Left ventricle myocardium inferior (tissue), 1 donor: ENCODE measurements at regions of chr3 and their contacts with region 1.

Region 1: DNA sequence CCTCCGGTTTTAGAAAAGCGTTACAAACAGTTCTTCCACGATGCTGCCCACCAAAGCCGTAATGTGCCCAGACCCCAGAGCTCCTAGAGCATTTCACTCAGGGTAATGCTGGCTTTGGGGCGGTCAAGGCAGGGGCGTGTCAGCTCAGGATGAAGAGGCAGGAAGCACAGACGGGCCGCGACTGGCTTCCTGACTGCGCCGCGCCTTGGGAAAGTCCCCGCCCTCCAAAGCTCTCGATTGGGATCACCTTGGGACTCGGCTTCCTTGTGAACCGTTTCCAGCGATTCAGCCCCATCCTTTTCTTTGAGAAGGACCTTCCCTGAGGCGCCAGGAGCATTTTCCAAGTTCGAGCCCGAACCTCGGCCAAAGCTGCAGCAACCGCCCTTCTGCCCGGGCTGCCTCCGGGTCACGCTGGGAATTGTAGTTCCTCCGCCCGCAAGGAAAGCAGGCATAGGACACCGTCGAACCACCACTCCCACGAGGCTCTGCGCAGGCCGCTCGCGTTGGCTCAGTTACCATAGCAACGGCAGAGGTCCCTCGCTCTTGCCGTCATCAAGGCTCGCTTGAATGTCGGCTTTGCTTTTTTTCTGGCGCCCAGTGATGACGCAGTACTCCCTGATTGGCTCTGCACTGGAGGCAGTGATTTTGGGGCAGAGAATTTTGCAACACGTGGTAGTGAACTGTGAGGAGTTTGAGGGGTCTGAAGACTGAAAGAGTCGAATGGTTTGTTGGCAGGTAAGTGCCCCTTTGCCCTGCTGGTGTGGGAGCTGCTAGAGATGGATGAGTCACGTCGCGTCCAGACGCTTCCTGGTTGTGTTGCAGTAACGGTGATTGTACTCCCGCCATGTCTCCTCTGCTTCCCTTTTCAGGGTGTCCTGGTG is at the starts of genes CCDC191 and QTRT2:
- DNase-seq: peak; percentile 98
- H3K4me3 ChIP-seq: peak within 1 kb of the TSS; percentile 80
- H3K27ac ChIP-seq: peak within 1 kb of the TSS; percentile 88
- H3K4me1 ChIP-seq: peaks cover 30% of the 10 kb centered on the region
- H3K27me3 ChIP-seq: no peaks in the 10 kb centered on the region
- CTCF ChIP-seq: no peak
- total RNA-seq, gene CCDC191: 0.77 TPM
- total RNA-seq, gene QTRT2: 4.1 TPM

Region 2: GRCh38 chr3:113736548-113737089 is 319.8 kb before region 1 on chr3:
- intact Hi-C with region 1: loop called (anchors 2 kb)
- DNase-seq: no peak
- H3K4me3 ChIP-seq: no peak overlapping the region
- H3K27ac ChIP-seq: peak overlapping the region; percentile 39
- H3K4me1 ChIP-seq: peaks cover 59% of the 10 kb centered on the region
- H3K27me3 ChIP-seq: no peaks in the 10 kb centered on the region
- CTCF ChIP-seq: peak; percentile 75

Region 3: GRCh38 chr3:114179575-114179974 is 123.2 kb after region 1 on chr3:
- intact Hi-C with region 1: no loop called
- DNase-seq: no peak
- H3K4me3 ChIP-seq: no peak overlapping the region
- H3K27ac ChIP-seq: no peak overlapping the region
- H3K4me1 ChIP-seq: peaks cover 15% of the 10 kb centered on the region
- H3K27me3 ChIP-seq: peaks cover 12% of the 10 kb centered on the region
- CTCF ChIP-seq: peak; percentile 29